AG04450 (cell line): ENCODE measurements at regions of chr9 and their contacts with region 1.

Region 1: DNA sequence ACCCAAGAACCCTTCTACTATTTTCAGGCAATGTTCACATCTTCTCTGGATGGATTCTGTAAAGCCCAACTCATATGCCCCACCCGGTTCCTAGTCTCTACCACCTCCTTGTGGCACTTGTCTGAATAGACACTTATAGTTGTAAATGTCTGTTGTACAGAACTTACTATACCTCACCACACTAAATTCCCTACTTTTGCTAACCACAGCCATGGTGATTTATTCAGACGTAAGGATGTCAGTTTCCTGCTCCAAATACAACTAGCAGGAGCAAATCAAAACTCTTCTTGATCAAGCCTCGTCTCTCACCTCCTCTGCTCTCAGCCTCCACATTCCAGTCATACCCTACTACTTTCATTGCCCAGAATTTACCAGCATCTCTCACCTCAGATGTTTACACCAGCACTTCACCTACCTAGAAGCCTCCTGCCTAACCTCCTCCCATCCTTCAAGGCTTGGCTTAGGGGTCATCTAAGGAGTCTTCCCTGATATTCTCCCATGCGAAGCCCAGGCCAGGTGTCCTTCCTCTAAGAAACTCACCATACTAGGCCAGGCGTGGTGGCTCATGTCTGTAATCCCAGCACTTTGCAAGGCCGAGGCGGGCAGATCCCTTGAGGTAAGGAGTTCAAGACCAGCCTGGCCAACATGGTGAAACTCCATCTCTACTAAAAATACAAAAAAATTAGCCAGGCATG is 75.5 kb downstream of the MAPKAP1 start:
- DNase-seq: no peak
- H3K4me3 ChIP-seq: no peak overlapping the region
- H3K27ac ChIP-seq: no peak overlapping the region
- H3K27me3 ChIP-seq: no peaks in the 10 kb centered on the region
- CTCF ChIP-seq: peak; percentile 69

Region 2: GRCh38 chr9:125137200-125137599 is 494.3 kb before region 1 on chr9:
- CTCF ChIA-PET with region 1: no interaction called
- POLR2A ChIA-PET with region 1: no interaction called
- DNase-seq: peak; percentile 84
- H3K4me3 ChIP-seq: no peak overlapping the region
- H3K27ac ChIP-seq: peak overlapping the region; percentile 61
- H3K27me3 ChIP-seq: no peaks in the 10 kb centered on the region
- CTCF ChIP-seq: no peak

Region 3: DNA sequence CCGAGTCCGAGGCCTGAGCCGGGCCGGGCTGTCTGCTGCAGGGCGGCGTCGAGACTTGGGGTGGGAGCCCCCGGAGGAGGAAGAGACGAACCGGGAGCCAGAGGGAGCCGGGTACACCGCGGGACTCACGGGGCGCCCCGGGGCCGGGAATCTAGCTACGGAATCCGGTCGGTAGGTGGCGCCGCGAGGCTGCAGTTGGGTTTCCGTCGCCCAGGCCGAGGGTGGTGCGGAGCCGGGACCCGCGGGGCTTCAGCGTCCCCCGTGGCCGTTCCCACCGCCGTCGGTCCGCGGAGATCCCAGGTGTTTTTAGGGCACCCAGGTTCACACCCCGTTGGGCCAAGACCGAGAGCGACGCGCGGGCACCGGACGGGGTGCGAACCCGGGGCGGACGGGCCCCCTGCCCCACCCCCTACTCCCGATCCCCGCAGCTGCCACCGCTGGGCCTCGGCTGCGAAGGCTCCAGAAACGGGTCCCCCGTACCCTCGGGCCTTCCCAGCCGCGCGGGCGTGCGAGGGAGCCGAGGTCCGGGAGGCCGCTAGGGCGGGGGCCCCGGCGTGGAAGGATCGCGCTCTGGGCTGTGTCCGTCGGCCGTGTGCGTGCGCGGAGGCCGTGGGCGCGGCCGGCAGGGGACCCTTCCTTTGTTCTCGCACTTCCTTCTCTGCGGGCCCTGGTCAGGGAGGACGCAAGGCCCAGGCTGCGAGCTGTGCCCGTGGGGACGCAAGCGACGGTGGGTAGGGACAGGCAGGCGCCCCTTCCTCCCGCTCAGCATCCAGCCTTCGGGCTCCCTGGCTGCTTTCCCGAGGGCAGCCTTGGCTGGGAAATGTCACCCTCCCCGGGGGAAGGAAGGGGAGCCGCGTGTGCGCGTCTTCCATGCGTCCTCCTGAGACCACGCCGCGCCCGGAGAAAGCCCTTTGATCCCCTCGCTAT is 223.3 kb before region 1 on chr9:
- CTCF ChIA-PET with region 1: interaction called, 12 read pairs
- POLR2A ChIA-PET with region 1: no interaction called
- DNase-seq: peak; percentile 27
- H3K4me3 ChIP-seq: peak overlapping the region; percentile 60
- H3K27ac ChIP-seq: no peak overlapping the region
- H3K27me3 ChIP-seq: no peaks in the 10 kb centered on the region
- CTCF ChIP-seq: peak; percentile 84

Region 4: DNA sequence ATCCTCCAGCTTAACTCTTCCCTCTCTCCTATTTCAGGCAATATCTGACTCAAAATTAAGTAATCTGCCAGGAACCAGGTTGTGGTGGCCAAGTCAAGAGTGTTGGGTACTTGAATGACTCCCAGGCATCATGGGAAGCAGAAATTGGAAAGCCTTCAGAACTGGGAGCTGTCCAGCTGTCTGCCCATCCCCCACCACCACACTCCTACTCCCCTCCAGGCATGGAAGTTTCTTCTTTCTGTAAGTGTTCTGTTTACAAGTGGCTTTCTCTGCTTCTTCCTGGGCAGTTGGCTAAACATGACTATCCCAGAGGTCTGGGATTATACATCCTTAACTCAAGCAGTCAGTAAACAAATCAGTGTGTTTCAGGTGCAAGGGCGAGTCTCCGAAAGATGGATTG is 101.0 kb after region 1 on chr9:
- CTCF ChIA-PET with region 1: no interaction called
- POLR2A ChIA-PET with region 1: no interaction called
- DNase-seq: no peak
- H3K4me3 ChIP-seq: no peak overlapping the region
- H3K27ac ChIP-seq: no peak overlapping the region
- H3K27me3 ChIP-seq: peaks cover 9% of the 10 kb centered on the region
- CTCF ChIP-seq: no peak